Sigmoid colon (tissue), 7 donors: ENCODE measurements at regions of chr9 and their contacts with region 1.

Region 1: GRCh38 chr9:15293804-15294321 is 13.2 kb downstream of the TTC39B start:
- DNase-seq: no peak
- H3K4me3 ChIP-seq: peak overlapping the region in 2 of 4 donors; percentile 11 to 21
- H3K27ac ChIP-seq: peak overlapping the region; percentile 81 to 83 (median 82)
- H3K4me1 ChIP-seq: peaks cover 0 to 38% (median 31%) of the 10 kb centered on the region in 4 donors
- H3K27me3 ChIP-seq: no peaks in the 10 kb centered on the region
- CTCF ChIP-seq: no peak
- EP300 ChIP-seq: no peak
- POLR2A ChIP-seq: no peak

Region 2: DNA sequence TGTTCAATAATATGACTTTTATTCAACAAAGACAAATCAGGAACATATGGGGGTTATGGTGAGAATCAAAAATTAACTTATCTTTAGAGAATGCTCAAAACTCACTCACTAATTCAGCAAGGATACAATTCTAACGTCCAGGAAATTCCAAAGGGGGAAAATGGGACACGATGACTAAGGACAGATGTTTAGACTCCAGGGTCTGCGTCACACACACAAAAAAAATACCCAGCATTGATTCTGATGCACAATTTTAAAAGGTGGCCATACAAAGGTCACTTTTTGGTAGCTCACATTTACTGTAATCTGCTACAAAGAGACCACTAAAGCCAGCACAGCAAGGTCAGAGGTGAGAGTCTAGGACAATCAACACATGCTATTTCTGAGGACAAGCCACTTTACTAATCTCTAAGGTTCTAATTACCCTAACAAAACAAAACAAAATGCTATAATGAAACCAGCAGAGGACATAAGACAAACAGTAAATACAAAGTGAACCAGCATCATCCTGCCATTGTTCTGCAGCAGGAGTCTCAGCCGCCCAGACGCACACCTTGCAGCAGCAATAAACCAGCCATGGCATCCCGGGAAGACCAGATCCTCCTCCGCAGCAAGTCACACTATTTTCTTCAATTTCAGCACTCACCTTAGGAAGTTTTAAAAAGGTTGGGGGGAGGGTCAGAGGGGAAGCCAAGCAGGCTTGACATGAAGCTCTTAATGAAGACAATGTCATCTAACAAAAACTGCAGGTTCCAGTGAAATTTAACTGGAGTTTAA is 44.6 kb before region 1 on chr9:
- intact Hi-C with region 1: no loop called
- DNase-seq: no peak
- H3K4me3 ChIP-seq: no peak overlapping the region
- H3K27ac ChIP-seq: peak overlapping the region in 3 of 4 donors; percentile 17 to 37 (median 29)
- H3K4me1 ChIP-seq: peaks cover 0 to 19% (median 7%) of the 10 kb centered on the region in 4 donors
- H3K27me3 ChIP-seq: no peaks in the 10 kb centered on the region
- CTCF ChIP-seq: no peak
- EP300 ChIP-seq: no peak
- POLR2A ChIP-seq: no peak

Region 3: GRCh38 chr9:15377625-15378540 is 84.0 kb after region 1 on chr9:
- intact Hi-C with region 1: no loop called
- DNase-seq: no peak
- H3K4me3 ChIP-seq: no peak overlapping the region
- H3K27ac ChIP-seq: peak overlapping the region in 3 of 4 donors; percentile 48 to 59 (median 58)
- H3K4me1 ChIP-seq: peaks cover 0 to 18% (median 7%) of the 10 kb centered on the region in 4 donors
- H3K27me3 ChIP-seq: no peaks in the 10 kb centered on the region
- CTCF ChIP-seq: no peak
- EP300 ChIP-seq: no peak
- POLR2A ChIP-seq: no peak

Region 4: DNA sequence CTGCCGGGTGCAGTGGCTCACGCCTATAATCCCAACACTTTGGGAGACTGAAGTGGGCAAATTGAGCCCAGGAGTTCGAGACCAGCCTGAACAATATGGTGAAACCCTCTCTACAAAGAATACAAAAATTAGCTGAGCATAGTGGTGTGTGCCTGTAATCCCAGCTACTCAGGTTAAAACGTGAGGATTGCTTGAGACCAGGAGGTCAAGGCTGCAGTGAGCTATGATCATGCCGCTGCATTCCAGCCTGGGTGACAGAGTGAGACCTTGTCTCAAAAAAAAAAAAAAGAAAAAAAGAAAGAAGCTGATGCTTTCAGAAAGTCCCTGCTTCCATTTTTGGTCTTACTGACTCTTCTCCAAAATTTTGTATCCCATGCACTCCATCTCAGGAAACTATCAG is 160.1 kb after region 1 on chr9:
- intact Hi-C with region 1: no loop called
- DNase-seq: no peak
- H3K4me3 ChIP-seq: no peak overlapping the region
- H3K27ac ChIP-seq: no peak overlapping the region
- H3K4me1 ChIP-seq: no peaks in the 10 kb centered on the region
- H3K27me3 ChIP-seq: no peaks in the 10 kb centered on the region
- CTCF ChIP-seq: no peak
- EP300 ChIP-seq: no peak
- POLR2A ChIP-seq: no peak

Region 5: DNA sequence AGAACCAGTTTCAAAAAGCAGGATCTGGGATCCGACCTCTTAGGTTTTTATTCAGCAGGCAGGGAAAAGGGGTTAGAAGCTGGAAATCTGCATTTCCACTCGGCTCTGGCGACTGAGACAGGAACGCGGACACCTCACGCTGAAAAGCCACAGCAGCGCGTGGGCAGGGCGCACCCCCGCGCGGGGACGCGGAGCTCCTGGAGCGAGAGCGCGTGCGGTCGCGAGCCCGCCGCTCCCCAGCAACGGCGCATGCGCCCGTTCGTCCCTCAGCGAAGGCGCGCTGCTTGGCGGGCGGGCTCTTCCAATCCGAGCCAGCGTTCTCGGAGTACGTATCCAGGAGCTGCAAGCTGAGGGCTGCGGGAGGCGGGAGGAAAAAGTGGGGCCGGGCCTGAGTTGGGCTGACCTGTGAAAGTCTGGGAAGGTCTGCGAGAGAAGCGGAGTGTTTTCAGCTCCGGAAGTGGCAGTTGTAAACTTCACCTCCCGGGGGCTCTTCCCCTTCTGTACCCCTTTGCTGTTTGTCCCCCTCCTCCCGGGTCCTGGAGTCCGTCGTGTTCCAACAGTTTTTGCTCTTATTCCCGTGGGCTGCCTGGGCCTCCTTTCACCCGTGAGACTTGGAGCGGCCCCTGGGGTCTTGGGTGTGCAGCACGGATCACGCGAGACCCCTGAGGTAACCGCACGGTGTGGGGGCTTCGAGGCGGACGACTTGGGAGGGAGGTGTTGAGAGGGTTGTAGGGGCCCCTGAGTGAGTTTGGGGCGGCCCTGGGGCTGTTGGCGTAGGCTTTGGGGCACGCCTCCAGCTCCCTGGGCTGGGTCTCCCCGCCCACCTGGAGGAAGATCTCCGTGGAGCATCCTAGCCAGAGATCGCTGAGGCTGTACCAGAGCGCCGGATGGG is 259.0 kb after region 1 on chr9 and contains the start of gene CCDC171:
- intact Hi-C with region 1: loop called (anchors 5 kb)
- DNase-seq: peak; percentile 98
- H3K4me3 ChIP-seq: peak within 1 kb of the TSS; percentile 66 to 85 (median 73)
- H3K27ac ChIP-seq: peak within 1 kb of the TSS; percentile 89 to 94 (median 91)
- H3K4me1 ChIP-seq: peaks cover 0 to 8% (median 6%) of the 10 kb centered on the region in 4 donors
- H3K27me3 ChIP-seq: no peaks in the 10 kb centered on the region
- CTCF ChIP-seq: no peak
- EP300 ChIP-seq: no peak
- POLR2A ChIP-seq: peak; percentile 23 to 41
- total RNA-seq, gene CCDC171: 2.9 to 6.1 (median 3.1) TPM